ENCODE measurements at regions of chr20 and their contacts with region 1.

Region 1: DNA sequence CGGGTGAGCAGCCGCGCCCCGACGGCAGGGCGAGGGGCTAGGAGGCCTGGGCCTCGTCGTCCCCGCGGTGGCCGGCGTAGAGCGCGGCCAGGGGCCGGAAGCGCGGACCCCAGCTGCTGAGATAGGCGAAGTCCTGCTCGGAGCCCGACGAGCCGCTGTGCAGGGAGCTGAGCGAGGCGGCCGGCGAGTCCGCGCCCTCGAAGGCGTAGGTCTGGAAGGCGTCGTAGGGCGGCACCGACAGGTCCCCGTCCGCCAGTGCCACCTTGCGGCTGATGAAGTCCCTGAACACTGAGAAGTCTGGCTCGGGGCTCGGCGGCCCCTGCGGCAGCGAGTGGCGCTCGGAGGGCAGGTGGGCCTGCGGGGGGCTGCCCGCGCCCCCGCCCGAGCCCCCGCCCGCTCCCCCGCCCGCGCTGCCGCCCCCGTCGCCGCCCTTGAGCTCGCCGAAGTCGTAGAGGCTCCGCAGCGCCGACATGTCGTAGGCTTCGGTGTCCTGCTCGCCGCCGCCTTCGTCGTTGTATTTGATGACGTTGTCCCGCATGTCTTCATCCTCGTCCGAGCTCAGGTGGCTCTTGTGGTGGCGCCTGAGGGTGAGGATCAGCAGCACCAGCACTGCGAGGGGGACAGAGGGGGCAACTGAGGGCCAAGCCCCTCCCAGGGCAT is 56.5 kb downstream of the CD40 start:
- DNase-seq: peak; percentile 80
- H3K4me3 Mint-ChIP-seq: no peak overlapping the region
- H3K27ac Mint-ChIP-seq: no peak overlapping the region
- H3K4me1 Mint-ChIP-seq: no peaks in the 10 kb centered on the region
- H3K27me3 Mint-ChIP-seq: peaks cover 86% of the 10 kb centered on the region

Region 2: GRCh38 chr20:46132705-46133120 is 41.9 kb before region 1 on chr20:
- CTCF ChIA-PET with region 1: interaction called, 26 read pairs
- DNase-seq: peak; percentile 69
- H3K4me3 Mint-ChIP-seq: no peak overlapping the region
- H3K27ac Mint-ChIP-seq: no peak overlapping the region
- H3K4me1 Mint-ChIP-seq: no peaks in the 10 kb centered on the region
- H3K27me3 Mint-ChIP-seq: peaks cover 58% of the 10 kb centered on the region

Region 3: DNA sequence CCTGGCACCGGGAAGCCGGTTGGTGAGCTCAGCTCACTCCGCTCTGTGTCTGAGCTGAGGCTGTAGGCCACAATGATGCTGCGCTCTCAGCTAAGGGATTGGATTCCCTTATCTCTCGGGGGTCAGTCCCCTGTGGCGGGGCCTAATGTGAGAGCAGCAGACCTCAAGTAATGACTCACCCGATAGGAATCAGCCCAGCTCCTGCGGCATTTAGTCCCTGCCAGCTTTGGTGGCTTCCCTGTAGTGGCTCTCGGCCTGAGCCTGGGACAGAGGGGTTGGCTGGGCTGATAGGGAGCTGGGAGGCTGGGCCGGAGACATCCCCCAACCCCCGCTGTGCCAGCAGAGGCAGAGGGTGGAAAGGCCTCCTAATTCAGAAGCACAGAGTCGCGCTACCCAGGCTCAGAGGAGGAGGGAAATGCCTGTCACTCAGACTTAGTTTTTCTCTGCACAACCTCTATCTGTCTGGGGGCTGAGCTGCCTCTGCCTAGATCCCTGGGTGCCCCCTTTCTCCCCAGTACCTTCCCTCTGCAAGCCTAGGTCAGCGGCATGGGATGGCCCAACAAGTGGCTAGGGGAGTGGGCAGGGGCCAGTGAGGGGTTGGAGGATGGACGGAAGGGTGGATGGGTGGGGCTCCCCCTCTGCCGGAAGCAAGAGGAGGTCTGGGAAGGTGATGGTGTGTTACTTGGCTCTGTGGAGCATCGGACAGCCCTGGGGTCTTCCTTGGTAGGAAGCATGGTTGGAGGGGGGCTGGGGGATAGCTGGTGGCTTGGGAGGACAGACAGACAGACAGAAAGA is 41.5 kb after region 1 on chr20:
- CTCF ChIA-PET with region 1: no interaction called
- DNase-seq: no peak
- H3K4me3 Mint-ChIP-seq: no peak overlapping the region
- H3K27ac Mint-ChIP-seq: no peak overlapping the region
- H3K4me1 Mint-ChIP-seq: no peaks in the 10 kb centered on the region
- H3K27me3 Mint-ChIP-seq: peaks cover 23% of the 10 kb centered on the region